Natural killer cell (primary cell): ENCODE measurements at regions of chrX and their contacts with region 1.

Region 1: DNA sequence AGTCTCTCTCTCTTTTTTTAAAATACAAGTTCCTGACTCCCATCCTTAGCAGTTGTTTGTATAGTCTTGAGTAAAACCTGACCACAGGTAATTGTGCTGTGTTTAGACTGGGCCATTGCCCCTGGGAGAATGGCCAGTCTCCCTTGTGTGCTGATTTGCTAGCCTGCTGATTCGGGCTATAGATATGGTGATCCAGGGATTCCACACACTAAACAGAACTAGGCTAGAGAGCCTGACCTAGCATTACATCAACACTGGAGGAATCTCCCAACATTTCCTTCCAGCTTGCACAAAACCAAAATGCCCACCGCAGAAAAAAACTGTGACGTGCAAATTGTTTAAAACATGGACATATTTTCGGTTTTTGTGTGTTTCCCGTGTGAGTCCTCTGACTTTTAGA is 5.1 kb downstream of the UPRT start:
- DNase-seq: no peak
- ATAC-seq: no peak
- H3K4me3 ChIP-seq: no peak overlapping the region
- H3K4me3 Mint-ChIP-seq: no peak overlapping the region
- H3K27ac ChIP-seq: no peak overlapping the region
- H3K27ac Mint-ChIP-seq: peak overlapping the region in 1 of 2 donors; percentile 28
- H3K4me1 ChIP-seq: no peaks in the 10 kb centered on the region
- H3K4me1 Mint-ChIP-seq: peaks cover 55 to 73% of the 10 kb centered on the region in 2 donors
- H3K27me3 ChIP-seq: no peaks in the 10 kb centered on the region
- H3K27me3 Mint-ChIP-seq: no peaks in the 10 kb centered on the region
- CTCF ChIP-seq: no peak

Region 2: GRCh38 chrX:75156021-75156945 is 122.7 kb before region 1 on chrX and contains the start of gene ABCB7:
- intact Hi-C with region 1: loop called (anchors 5 kb)
- DNase-seq: peak; percentile 47 to 82
- ATAC-seq: peak; percentile 84 to 95 (median 92)
- H3K4me3 ChIP-seq: peak within 1 kb of the TSS; percentile 80
- H3K4me3 Mint-ChIP-seq: peak within 1 kb of the TSS; percentile 96
- H3K27ac ChIP-seq: peak within 1 kb of the TSS; percentile 79
- H3K27ac Mint-ChIP-seq: peak within 1 kb of the TSS; percentile 97 to 99
- H3K4me1 ChIP-seq: no peaks in the 10 kb centered on the region
- H3K4me1 Mint-ChIP-seq: peaks cover 12 to 31% of the 10 kb centered on the region in 2 donors
- H3K27me3 ChIP-seq: no peaks in the 10 kb centered on the region
- H3K27me3 Mint-ChIP-seq: peaks cover 0 to 6% of the 10 kb centered on the region in 2 donors
- CTCF ChIP-seq: no peak
- total RNA-seq, gene ABCB7: 17.9 to 26.8 (median 20.4) TPM